A549 (cell line): ENCODE measurements at regions of chr19 and their contacts with region 1.

Region 1: GRCh38 chr19:38544034-38544958 is 73.5 kb downstream of the MAP4K1 start:
- DNase-seq: peak; percentile 96 to 98
- ATAC-seq: peak; percentile 89 to 93
- H3K4me3 ChIP-seq: peak overlapping the region; percentile 37
- H3K27ac ChIP-seq: peak overlapping the region; percentile 59 to 69
- H3K4me1 ChIP-seq: peaks cover 14% of the 10 kb centered on the region
- CTCF ChIP-seq: peak; percentile 100
- EP300 ChIP-seq: no peak
- POLR2A ChIP-seq: no peak
- RAD21 ChIP-seq: peak; percentile 99

Region 2: GRCh38 chr19:38527466-38528136 is 16.7 kb before region 1 on chr19:
- CTCF ChIA-PET with region 1: interaction called, 94 read pairs
- POLR2A ChIA-PET with region 1: interaction called, 3 read pairs
- DNase-seq: peak in 1 of 2 experiments; percentile 55
- ATAC-seq: peak in 1 of 2 experiments; percentile 12; a peak in 3 of 6 replicates
- H3K4me3 ChIP-seq: no peak overlapping the region
- H3K27ac ChIP-seq: peak overlapping the region in 1 of 2 experiments; percentile 0; a peak in 1 of 6 replicates
- H3K4me1 ChIP-seq: peaks cover 5% of the 10 kb centered on the region; the same call in 2 of the 3 replicates
- CTCF ChIP-seq: no peak
- EP300 ChIP-seq: no peak
- POLR2A ChIP-seq: no peak
- RAD21 ChIP-seq: no peak

Region 3: DNA sequence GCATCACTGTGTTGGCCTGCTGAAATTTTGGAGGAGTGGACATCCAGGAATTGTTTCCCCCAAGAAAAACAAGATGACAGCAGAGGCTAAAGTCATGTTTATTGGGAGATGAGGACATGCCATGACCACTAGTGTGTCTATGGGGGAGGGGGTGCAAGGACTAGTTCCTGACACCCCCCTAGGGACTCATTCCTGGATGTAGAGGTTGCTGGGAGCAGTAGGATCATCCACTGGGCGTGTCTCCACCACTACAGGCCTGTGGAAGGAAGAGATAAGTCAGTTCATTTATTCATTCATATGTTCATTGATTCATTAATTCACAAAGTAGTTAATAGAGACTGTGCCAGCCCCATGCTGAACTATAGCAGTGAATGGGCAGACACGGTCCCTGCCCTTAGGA is 43.3 kb after region 1 on chr19:
- CTCF ChIA-PET with region 1: interaction called, 10 read pairs
- POLR2A ChIA-PET with region 1: interaction called, 3 read pairs
- DNase-seq: no peak
- ATAC-seq: no peak
- H3K4me3 ChIP-seq: no peak overlapping the region
- H3K27ac ChIP-seq: no peak overlapping the region
- H3K4me1 ChIP-seq: no peaks in the 10 kb centered on the region
- CTCF ChIP-seq: no peak
- EP300 ChIP-seq: no peak
- POLR2A ChIP-seq: no peak
- RAD21 ChIP-seq: no peak

Region 4: DNA sequence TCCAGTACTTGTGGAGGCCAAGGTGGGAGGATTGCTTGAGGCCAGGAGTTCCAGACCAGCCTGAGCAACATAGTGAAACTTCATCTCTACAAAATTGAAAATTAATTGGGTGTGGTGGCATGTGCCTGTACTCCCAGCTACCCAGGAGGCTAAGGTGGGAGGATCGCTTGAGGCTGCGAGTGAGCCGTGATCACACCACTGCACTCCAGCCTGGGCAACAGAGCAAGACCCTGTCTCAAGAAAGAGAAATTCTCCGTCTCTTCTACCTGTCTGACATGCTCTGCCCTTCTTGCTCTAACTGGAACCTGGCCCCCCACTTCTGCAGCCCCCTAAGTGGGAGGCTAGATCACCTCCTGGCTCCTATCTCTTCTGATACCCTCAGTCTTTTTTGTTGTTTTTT is 82.1 kb after region 1 on chr19:
- CTCF ChIA-PET with region 1: interaction called, 29 read pairs
- POLR2A ChIA-PET with region 1: no interaction called
- DNase-seq: no peak
- ATAC-seq: no peak
- H3K4me3 ChIP-seq: no peak overlapping the region
- H3K27ac ChIP-seq: no peak overlapping the region
- H3K4me1 ChIP-seq: peaks cover 23% of the 10 kb centered on the region
- CTCF ChIP-seq: no peak
- EP300 ChIP-seq: no peak
- POLR2A ChIP-seq: no peak
- RAD21 ChIP-seq: no peak

Region 5: GRCh38 chr19:38683393-38684080 is 139.2 kb after region 1 on chr19:
- CTCF ChIA-PET with region 1: interaction called, 10 read pairs
- POLR2A ChIA-PET with region 1: no interaction called
- DNase-seq: peak; percentile 100
- ATAC-seq: peak; percentile 68 to 74
- H3K4me3 ChIP-seq: peak overlapping the region; percentile 6; the same call in 2 of the 3 replicates
- H3K27ac ChIP-seq: peak overlapping the region; percentile 93 to 94
- H3K4me1 ChIP-seq: peaks cover 90% of the 10 kb centered on the region
- CTCF ChIP-seq: no peak
- EP300 ChIP-seq: peak; percentile 93 to 95; a peak in 4 of 5 replicates
- POLR2A ChIP-seq: no peak; the same call in 1 of the 2 replicates
- RAD21 ChIP-seq: peak in 1 of 2 experiments; percentile 37

Region 6: GRCh38 chr19:38891771-38892170 is 347.5 kb after region 1 on chr19:
- CTCF ChIA-PET with region 1: interaction called, 28 read pairs
- POLR2A ChIA-PET with region 1: no interaction called
- DNase-seq: no peak
- ATAC-seq: no peak
- H3K4me3 ChIP-seq: no peak overlapping the region
- H3K27ac ChIP-seq: no peak overlapping the region
- H3K4me1 ChIP-seq: no peaks in the 10 kb centered on the region
- CTCF ChIP-seq: no peak
- EP300 ChIP-seq: no peak
- POLR2A ChIP-seq: no peak
- RAD21 ChIP-seq: no peak